GM12878 (cell line): ENCODE measurements at regions of chr2 and their contacts with region 1.

Region 1: GRCh38 chr2:127591221-127591923 is 54.6 kb upstream of the GPR17 start:
- DNase-seq: no peak
- ATAC-seq: peak; percentile 98
- H3K4me3 ChIP-seq: no peak overlapping the region
- H3K27ac ChIP-seq: no peak overlapping the region
- H3K4me1 ChIP-seq: no peaks in the 10 kb centered on the region
- H3K27me3 ChIP-seq: no peaks in the 10 kb centered on the region
- CTCF ChIP-seq: peak; percentile 96 to 99 (median 96); a peak in 5 of 6 replicates
- EP300 ChIP-seq: no peak
- POLR2A ChIP-seq: no peak
- RAD21 ChIP-seq: peak; percentile 97

Region 2: GRCh38 chr2:127576433-127577207 is 14.8 kb before region 1 on chr2:
- CTCF ChIA-PET with region 1: interaction called, 10 read pairs
- POLR2A ChIA-PET with region 1: no interaction called
- RAD21 ChIA-PET with region 1: interaction called, 4 read pairs
- SMC1A ChIA-PET with region 1: interaction called, 5 read pairs
- in situ Hi-C with region 1: no loop called
- intact Hi-C with region 1: no loop called
- DNase-seq: no peak
- ATAC-seq: no peak
- H3K4me3 ChIP-seq: no peak overlapping the region
- H3K27ac ChIP-seq: no peak overlapping the region
- H3K4me1 ChIP-seq: peaks cover 23% of the 10 kb centered on the region
- H3K27me3 ChIP-seq: peaks cover 0 to 1% of the 10 kb centered on the region in 2 experiments; a peak in 1 of 4 replicates
- CTCF ChIP-seq: no peak
- EP300 ChIP-seq: no peak
- POLR2A ChIP-seq: no peak
- RAD21 ChIP-seq: no peak

Region 3: DNA sequence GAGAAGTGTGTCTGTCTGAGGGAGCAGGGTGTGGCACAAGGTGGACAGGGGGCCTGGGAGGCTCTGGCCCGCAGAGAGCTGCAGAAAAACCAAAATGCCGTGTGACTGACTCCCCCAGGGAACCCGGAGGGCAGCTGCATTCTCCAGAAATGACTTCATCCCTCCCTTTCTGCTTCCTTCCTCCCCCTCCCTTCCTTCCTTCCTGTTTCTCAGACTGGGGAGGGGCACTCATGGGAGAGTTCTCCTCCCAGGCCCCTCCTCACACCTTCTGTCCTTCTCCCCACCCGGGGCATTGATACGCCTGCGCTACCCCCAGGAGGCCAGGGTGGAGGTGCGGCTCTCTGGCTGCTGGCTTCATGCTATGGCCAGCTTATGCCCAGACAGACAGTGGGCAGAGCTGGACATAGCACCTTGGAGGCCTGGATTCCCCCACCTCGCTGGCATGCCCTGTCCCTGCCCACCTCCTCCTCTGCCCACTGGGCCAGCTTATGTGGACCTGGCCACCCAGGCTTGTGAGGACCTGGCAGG is 46.4 kb after region 1 on chr2:
- CTCF ChIA-PET with region 1: interaction called, 12 read pairs
- POLR2A ChIA-PET with region 1: no interaction called
- RAD21 ChIA-PET with region 1: interaction called, 8 read pairs
- SMC1A ChIA-PET with region 1: no interaction called
- in situ Hi-C with region 1: no loop called
- intact Hi-C with region 1: loop called (anchors 5 kb)
- DNase-seq: no peak
- ATAC-seq: no peak
- H3K4me3 ChIP-seq: no peak overlapping the region
- H3K27ac ChIP-seq: no peak overlapping the region
- H3K4me1 ChIP-seq: peaks cover 13% of the 10 kb centered on the region
- H3K27me3 ChIP-seq: no peaks in the 10 kb centered on the region
- CTCF ChIP-seq: no peak
- EP300 ChIP-seq: no peak
- POLR2A ChIP-seq: no peak
- RAD21 ChIP-seq: no peak

Region 4: GRCh38 chr2:127810619-127811396 is 219.4 kb after region 1 on chr2 and contains the start of gene WDR33:
- CTCF ChIA-PET with region 1: interaction called, 6 read pairs
- POLR2A ChIA-PET with region 1: no interaction called
- RAD21 ChIA-PET with region 1: interaction called, 20 read pairs
- SMC1A ChIA-PET with region 1: interaction called, 4 read pairs
- in situ Hi-C with region 1: no loop called
- intact Hi-C with region 1: no loop called
- DNase-seq: peak; percentile 87
- ATAC-seq: peak; percentile 97
- H3K4me3 ChIP-seq: peak within 1 kb of the TSS; percentile 84
- H3K27ac ChIP-seq: peak within 1 kb of the TSS; percentile 96
- H3K4me1 ChIP-seq: peaks cover 6% of the 10 kb centered on the region
- H3K27me3 ChIP-seq: no peaks in the 10 kb centered on the region
- CTCF ChIP-seq: peak; percentile 21 to 51 (median 44); a peak in 4 of 6 replicates
- EP300 ChIP-seq: peak in 1 of 2 experiments; percentile 4; a peak in 1 of 4 replicates
- POLR2A ChIP-seq: peak; percentile 92
- RAD21 ChIP-seq: peak; percentile 64
- polyA plus RNA-seq, gene WDR33: 31.9 to 53.0 TPM